ENCODE measurements at regions of chr6 and their contacts with region 1.

Region 1: GRCh38 chr6:25223490-25223991 is 55.6 kb upstream of the CARMIL1 start:
- DNase-seq: peak; percentile 71
- ATAC-seq: peak; percentile 55
- H3K4me3 Mint-ChIP-seq: no peak overlapping the region
- H3K27ac Mint-ChIP-seq: no peak overlapping the region
- H3K4me1 Mint-ChIP-seq: peaks cover 23% of the 10 kb centered on the region
- H3K27me3 Mint-ChIP-seq: no peaks in the 10 kb centered on the region; the same call in 1 of the 2 replicates
- CTCF ChIP-seq: peak; percentile 69

Region 2: GRCh38 chr6:25250878-25251277 is 27.3 kb after region 1 on chr6:
- CTCF ChIA-PET with region 1: interaction called, 12 read pairs
- POLR2A ChIA-PET with region 1: no interaction called
- DNase-seq: no peak
- ATAC-seq: no peak
- H3K4me3 Mint-ChIP-seq: no peak overlapping the region
- H3K27ac Mint-ChIP-seq: no peak overlapping the region
- H3K4me1 Mint-ChIP-seq: no peaks in the 10 kb centered on the region
- H3K27me3 Mint-ChIP-seq: no peaks in the 10 kb centered on the region
- CTCF ChIP-seq: no peak

Region 3: GRCh38 chr6:25266456-25267100 is 43.0 kb after region 1 on chr6:
- CTCF ChIA-PET with region 1: interaction called, 14 read pairs
- POLR2A ChIA-PET with region 1: no interaction called
- DNase-seq: no peak
- ATAC-seq: no peak
- H3K4me3 Mint-ChIP-seq: no peak overlapping the region
- H3K27ac Mint-ChIP-seq: no peak overlapping the region
- H3K4me1 Mint-ChIP-seq: peaks cover 11% of the 10 kb centered on the region
- H3K27me3 Mint-ChIP-seq: no peaks in the 10 kb centered on the region; the same call in 1 of the 2 replicates
- CTCF ChIP-seq: no peak

Region 4: GRCh38 chr6:25302677-25303128 is 79.2 kb after region 1 on chr6:
- CTCF ChIA-PET with region 1: no interaction called
- POLR2A ChIA-PET with region 1: no interaction called
- DNase-seq: no peak
- ATAC-seq: no peak; the same call in 1 of the 2 replicates
- H3K4me3 Mint-ChIP-seq: no peak overlapping the region
- H3K27ac Mint-ChIP-seq: no peak overlapping the region
- H3K4me1 Mint-ChIP-seq: peaks cover 39% of the 10 kb centered on the region
- H3K27me3 Mint-ChIP-seq: no peaks in the 10 kb centered on the region
- CTCF ChIP-seq: no peak

Region 5: DNA sequence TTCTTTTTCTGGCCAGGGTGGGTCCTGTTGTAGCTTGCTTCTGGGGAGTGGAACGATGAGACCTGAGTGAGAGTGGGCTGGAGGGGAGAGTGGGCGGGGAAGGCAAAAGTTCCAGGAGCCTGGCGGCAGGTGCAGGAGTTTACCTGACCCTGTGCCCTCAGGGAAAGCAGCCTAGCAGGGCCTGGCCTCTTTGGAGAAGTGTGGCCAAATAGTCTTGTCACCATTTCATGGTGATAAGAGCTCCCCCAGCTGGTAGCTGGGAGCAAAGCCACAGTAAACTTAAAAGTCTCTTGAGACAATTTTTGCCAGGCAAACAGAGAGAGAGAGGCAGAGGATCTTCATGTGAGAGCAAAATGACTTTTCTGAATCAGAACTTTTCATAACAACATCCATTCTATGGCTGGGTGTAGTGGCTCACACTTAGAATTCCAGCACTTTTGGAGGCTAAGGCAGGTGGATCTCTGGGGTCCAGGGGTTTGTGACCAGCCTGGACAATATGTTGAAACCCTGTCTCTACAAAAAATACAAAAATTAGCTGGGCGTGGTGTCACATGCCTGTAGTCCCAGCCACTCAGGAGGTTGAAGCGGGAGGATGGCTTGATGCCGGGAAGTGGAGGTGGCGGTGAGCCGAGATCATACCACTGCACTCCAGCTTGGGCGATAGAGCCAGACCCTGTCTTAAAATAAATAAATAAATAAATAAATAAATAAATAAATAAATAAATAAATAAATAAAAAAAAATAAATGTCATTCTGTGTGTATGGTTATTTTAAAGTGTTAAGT is 266.7 kb after region 1 on chr6:
- CTCF ChIA-PET with region 1: interaction called, 15 read pairs
- POLR2A ChIA-PET with region 1: no interaction called
- DNase-seq: peak; percentile 86
- ATAC-seq: peak; percentile 100
- H3K4me3 Mint-ChIP-seq: no peak overlapping the region
- H3K27ac Mint-ChIP-seq: peak overlapping the region; percentile 73
- H3K4me1 Mint-ChIP-seq: peaks cover 16% of the 10 kb centered on the region
- H3K27me3 Mint-ChIP-seq: no peaks in the 10 kb centered on the region
- CTCF ChIP-seq: peak; percentile 64

Region 6: GRCh38 chr6:25556516-25556915 is 333.0 kb after region 1 on chr6:
- CTCF ChIA-PET with region 1: interaction called, 24 read pairs
- POLR2A ChIA-PET with region 1: no interaction called
- DNase-seq: peak; percentile 87
- ATAC-seq: peak; percentile 82
- H3K4me3 Mint-ChIP-seq: no peak overlapping the region
- H3K27ac Mint-ChIP-seq: 0 out of 2 replicates have a peak overlapping the region, but pooled peaks have one; percentile 78
- H3K4me1 Mint-ChIP-seq: peaks cover 7% of the 10 kb centered on the region
- H3K27me3 Mint-ChIP-seq: no peaks in the 10 kb centered on the region
- CTCF ChIP-seq: peak; percentile 63

Region 7: GRCh38 chr6:25601800-25602673 is 378.5 kb after region 1 on chr6:
- CTCF ChIA-PET with region 1: interaction called, 25 read pairs
- POLR2A ChIA-PET with region 1: no interaction called
- DNase-seq: no peak
- ATAC-seq: no peak
- H3K4me3 Mint-ChIP-seq: no peak overlapping the region
- H3K27ac Mint-ChIP-seq: peak overlapping the region; percentile 66; the same call in 1 of the 2 replicates
- H3K4me1 Mint-ChIP-seq: peaks cover 6% of the 10 kb centered on the region; the same call in 1 of the 2 replicates
- H3K27me3 Mint-ChIP-seq: no peaks in the 10 kb centered on the region
- CTCF ChIP-seq: 0 out of 2 replicates have a peak, but pooled peaks have one; percentile 17

Region 8: GRCh38 chr6:25717866-25718740 is 494.6 kb after region 1 on chr6:
- CTCF ChIA-PET with region 1: interaction called, 24 read pairs
- POLR2A ChIA-PET with region 1: no interaction called
- DNase-seq: no peak
- ATAC-seq: no peak
- H3K4me3 Mint-ChIP-seq: no peak overlapping the region
- H3K27ac Mint-ChIP-seq: no peak overlapping the region
- H3K4me1 Mint-ChIP-seq: peaks cover 4% of the 10 kb centered on the region; the same call in 1 of the 2 replicates
- H3K27me3 Mint-ChIP-seq: no peaks in the 10 kb centered on the region
- CTCF ChIP-seq: no peak; the same call in 1 of the 2 replicates